Activated CD8-positive, alpha-beta T cell treated with anti-CD3 and anti-CD28 coated beads, Interleukin-2, amount 10 ng/mL, durations not matched to agents 7 days and 5 days (primary cell): ENCODE measurements at regions of chr7 and their contacts with region 1.

Region 1: DNA sequence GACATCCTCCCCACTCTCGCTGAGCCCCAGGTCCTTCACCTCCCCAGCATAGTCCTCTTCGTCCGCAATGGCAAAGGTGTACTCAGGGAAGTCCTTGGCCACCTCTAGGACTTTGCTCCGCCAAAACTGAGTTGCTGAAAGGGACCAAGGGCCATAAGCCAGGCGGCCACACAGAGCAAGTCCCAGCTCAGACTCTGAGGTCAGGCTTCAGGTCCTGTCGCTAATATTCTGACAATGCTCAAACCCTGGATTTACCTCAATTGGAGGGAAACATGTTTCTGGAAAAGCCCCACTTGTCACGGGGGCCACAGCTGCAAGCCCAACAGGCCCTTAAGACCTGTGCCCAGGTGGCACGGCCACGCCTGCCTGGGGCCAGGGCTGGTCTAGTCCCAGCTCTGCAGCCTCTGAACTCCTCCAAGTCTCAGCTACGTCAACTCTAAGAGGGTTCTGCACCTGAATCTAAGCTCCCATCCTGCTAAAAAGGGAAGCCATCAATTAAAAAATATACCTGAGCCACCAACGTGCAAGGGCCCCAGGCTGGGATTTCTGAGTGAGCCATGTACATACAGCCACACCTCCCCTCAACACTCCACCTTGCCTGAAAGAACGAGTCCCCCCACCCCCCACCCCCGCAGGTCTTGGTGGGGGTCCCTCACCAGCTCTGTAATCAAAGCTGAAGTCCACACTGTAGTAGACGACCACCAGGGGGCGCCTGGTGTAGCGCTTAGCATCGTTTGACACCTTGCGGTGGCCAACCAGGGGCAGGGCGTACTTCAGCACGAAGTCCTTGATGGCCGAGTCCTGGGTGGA is 22.9 kb downstream of the PDIA4 start:
- DNase-seq: peak; percentile 87
- ATAC-seq: peak; percentile 86
- H3K4me3 Mint-ChIP-seq: no peak overlapping the region
- H3K27ac Mint-ChIP-seq: no peak overlapping the region
- H3K4me1 Mint-ChIP-seq: peaks cover 3% of the 10 kb centered on the region
- H3K27me3 Mint-ChIP-seq: no peaks in the 10 kb centered on the region

Region 2: DNA sequence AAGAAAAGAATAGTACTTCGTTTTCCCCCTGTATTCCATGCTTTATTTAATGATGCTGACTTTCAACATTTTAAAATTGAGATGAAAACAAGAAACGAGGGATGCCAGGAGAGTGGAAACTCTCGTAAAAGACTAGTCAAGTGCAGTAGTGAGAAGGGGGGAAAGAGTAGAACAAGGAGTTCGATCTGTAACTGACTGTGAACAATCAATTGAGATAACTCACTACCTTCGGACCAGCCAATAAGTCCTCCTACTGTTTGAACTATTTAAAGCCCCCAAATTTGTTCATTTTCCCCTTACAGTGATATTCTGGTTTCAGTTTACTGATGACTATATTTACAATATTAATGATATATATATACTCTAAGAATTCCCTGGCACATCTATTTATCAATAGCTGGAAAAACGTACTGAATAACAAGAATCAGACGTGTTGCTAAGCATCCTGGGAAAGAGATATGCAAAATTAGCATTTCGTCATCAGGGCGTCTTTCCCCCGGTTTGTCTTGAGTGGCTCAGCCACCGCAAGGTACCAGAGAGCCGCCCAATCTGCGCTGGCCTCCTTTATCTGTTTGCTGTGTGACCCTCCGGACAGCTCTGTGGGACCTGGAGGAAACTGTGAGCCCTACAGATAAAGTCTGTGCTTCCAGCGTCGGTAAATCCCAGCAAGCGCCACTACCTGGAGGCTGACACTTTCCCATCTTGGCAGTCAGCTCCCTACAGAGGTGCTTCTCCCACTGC is 18.3 kb before region 1 on chr7:
- CTCF ChIA-PET with region 1: interaction called, 34 read pairs
- POLR2A ChIA-PET with region 1: interaction called, 6 read pairs
- DNase-seq: peak; percentile 89
- ATAC-seq: peak; percentile 86
- H3K4me3 Mint-ChIP-seq: peak overlapping the region; percentile 97
- H3K27ac Mint-ChIP-seq: peak overlapping the region; percentile 97
- H3K4me1 Mint-ChIP-seq: peaks cover 46% of the 10 kb centered on the region
- H3K27me3 Mint-ChIP-seq: peaks cover 24% of the 10 kb centered on the region

Region 3: DNA sequence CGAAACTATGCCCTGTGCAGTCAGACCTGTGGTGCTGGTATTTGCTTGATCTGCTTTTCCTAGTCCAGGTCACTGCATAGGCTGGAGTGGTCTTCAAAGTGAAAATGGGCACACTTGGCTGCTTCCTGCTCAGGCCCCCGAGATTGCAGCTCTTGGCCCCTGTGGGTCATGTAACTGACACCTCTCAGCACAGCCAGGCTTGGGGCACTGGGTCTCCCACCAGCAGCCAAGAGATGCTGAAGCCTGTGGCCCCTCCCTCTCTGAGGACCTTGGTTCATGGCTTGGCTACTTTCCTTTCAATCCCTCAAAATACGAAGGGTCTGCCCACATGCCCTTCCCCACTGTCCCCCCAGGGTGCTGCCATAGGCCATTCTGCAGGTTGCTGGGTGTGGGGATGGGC is 10.8 kb before region 1 on chr7:
- CTCF ChIA-PET with region 1: interaction called, 11 read pairs
- POLR2A ChIA-PET with region 1: no interaction called
- DNase-seq: no peak
- ATAC-seq: no peak
- H3K4me3 Mint-ChIP-seq: no peak overlapping the region
- H3K27ac Mint-ChIP-seq: no peak overlapping the region
- H3K4me1 Mint-ChIP-seq: no peaks in the 10 kb centered on the region
- H3K27me3 Mint-ChIP-seq: peaks cover 6% of the 10 kb centered on the region

Region 4: GRCh38 chr7:149028346-149029109 is 23.1 kb after region 1 on chr7 and contains the start of gene PDIA4:
- CTCF ChIA-PET with region 1: interaction called, 15 read pairs
- POLR2A ChIA-PET with region 1: interaction called, 3 read pairs
- DNase-seq: peak; percentile 100
- ATAC-seq: peak; percentile 95
- H3K4me3 Mint-ChIP-seq: peak within 1 kb of the TSS; percentile 94
- H3K27ac Mint-ChIP-seq: peak within 1 kb of the TSS; percentile 94
- H3K4me1 Mint-ChIP-seq: peaks cover 46% of the 10 kb centered on the region
- H3K27me3 Mint-ChIP-seq: peaks cover 4% of the 10 kb centered on the region
- total RNA-seq, gene PDIA4: 90.6 to 92.2 TPM

Region 5: DNA sequence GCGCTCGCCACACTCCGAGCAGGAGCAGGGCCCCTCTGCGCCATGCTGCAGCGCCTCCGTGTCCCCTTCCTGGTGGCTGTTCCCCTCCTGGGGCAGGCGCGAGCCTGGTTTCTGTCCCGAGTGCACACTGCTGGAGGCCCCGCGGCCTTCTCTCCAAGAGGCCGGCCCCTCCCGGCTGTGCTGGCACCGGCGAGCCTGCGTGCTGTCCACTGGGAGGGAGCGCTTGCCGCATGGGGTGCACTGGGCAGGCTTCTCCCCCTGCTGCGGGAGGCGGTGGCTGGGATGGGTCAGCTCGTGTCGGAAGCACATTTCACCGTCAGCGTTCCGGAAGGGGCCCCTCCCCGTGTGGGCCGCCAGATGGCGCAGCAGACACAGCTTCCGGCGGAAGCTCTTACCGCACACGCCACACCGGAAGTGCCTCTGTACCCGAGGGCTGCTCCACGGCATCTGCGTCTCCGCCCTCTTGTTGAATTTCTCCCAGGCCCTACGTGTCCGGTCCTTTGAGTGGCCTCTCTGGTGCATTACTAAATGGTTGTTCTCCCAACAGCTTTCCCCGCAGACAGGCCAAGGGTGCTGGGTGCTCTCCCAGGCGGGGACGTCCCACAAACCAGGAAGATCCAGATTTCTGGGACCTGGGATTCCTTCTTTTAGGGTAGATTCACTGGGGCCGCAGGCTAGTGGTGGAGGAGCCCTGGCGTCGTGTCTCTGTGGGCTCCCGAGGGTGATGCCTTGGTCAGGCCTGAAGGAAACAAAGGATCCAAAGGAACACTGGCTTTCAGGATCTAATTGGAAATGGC is 66.4 kb after region 1 on chr7:
- CTCF ChIA-PET with region 1: interaction called, 46 read pairs
- POLR2A ChIA-PET with region 1: no interaction called
- DNase-seq: peak; percentile 62
- ATAC-seq: peak; percentile 73
- H3K4me3 Mint-ChIP-seq: no peak overlapping the region
- H3K27ac Mint-ChIP-seq: peak overlapping the region; percentile 34
- H3K4me1 Mint-ChIP-seq: peaks cover 7% of the 10 kb centered on the region
- H3K27me3 Mint-ChIP-seq: no peaks in the 10 kb centered on the region

Region 6: GRCh38 chr7:149104749-149105148 is 99.3 kb after region 1 on chr7:
- CTCF ChIA-PET with region 1: no interaction called
- POLR2A ChIA-PET with region 1: no interaction called
- DNase-seq: no peak
- ATAC-seq: no peak
- H3K4me3 Mint-ChIP-seq: no peak overlapping the region
- H3K27ac Mint-ChIP-seq: no peak overlapping the region
- H3K4me1 Mint-ChIP-seq: no peaks in the 10 kb centered on the region
- H3K27me3 Mint-ChIP-seq: peaks cover 2% of the 10 kb centered on the region